ENCODE measurements at regions of chr1 and their contacts with region 1.

Region 1: DNA sequence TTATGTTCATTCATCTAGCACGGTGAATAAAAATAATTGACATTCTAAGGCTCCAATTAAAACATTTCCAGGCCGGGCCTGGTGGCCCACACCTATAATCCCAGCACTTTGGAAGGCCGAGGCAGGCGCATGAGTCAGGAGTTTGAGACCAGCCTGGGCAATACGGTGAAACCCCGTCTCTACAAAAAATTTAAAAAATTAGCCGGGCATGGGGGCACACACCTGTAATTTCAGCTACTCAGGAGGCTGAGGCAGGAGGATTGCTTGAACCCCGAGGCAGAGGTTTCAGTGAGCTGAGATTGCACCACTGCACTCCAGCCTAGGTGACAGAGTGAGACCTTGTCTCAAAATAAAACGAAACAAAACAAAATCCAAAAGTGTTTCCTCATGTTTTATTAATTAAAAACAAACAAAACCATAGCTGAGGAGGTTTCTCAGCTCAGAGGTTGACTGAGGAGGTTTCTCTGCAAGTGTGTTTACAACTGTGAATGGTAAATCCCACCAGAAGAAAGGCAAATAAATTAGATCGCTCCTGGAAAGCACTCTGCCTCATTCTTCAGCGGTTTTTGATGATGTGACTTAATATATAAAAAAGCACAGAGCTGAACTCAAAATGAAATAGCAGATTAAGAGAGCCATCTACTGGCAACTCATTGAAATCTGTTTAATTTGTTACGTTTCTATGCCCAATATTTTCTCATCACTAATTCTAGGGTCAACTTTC is 37.7 kb upstream of the ATG4C start:
- DNase-seq: peak; percentile 54

Region 2: GRCh38 chr1:62530516-62531154 is 215.6 kb before region 1 on chr1:
- CTCF ChIA-PET with region 1: interaction called, 12 read pairs
- POLR2A ChIA-PET with region 1: no interaction called
- DNase-seq: peak; percentile 72

Region 3: DNA sequence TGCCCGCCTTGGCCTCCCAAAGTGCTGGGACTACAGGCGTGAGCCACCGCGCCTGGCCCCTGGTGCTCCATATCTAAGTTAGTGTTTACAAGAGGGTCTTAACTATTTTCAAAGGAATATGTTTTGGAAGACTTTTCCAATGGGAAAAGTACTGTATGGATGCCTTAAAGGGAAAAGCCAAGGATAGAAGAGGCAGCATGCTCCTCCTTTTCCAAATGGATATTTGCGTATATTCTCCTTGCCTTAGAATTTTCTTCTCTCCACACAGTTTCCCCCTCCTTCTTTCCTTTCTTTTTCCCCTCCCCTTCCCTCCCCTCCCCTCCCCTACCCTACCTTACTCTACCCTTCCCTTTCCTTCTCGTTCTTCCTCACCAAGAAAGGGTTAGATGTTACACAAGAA is 28.8 kb before region 1 on chr1:
- CTCF ChIA-PET with region 1: no interaction called
- POLR2A ChIA-PET with region 1: no interaction called
- DNase-seq: no peak